Activated CD8-positive, alpha-beta T cell treated with anti-CD3 and anti-CD28 coated beads for 36 hours (primary cell): ENCODE measurements at regions of chr14 and their contacts with region 1.

Region 1: DNA sequence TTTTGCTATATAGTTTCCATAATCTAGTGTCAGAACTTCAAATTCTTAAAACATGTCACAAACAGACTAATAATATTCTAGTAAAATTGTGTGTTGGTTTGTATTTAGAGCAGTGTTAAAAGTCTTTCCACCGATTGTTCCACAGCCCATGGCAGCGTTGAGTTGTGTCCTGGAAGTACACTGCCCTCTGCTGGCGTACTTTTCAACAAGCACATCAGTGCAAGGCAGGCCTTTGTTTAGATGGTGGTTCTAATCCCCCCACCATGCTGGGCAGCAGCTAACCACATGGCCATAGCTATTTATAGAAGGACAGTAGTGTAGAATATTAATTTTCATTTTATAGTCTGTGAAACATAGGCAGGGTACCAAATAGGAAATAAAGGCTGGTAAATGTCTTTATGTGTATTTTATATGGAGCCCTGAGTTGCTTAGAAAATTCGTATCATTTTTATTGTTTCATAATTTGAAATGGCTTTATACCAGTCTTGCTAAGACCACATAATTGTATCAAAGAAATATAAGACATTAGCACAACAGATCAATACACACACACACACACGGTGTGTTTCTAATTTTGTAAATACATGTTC is 235.4 kb downstream of the SEC23A start:
- DNase-seq: peak; percentile 76
- ATAC-seq: peak; percentile 80
- H3K4me3 Mint-ChIP-seq: no peak overlapping the region
- H3K27ac Mint-ChIP-seq: no peak overlapping the region
- H3K4me1 Mint-ChIP-seq: no peaks in the 10 kb centered on the region
- H3K27me3 Mint-ChIP-seq: no peaks in the 10 kb centered on the region
- CTCF ChIP-seq: peak; percentile 76

Region 2: DNA sequence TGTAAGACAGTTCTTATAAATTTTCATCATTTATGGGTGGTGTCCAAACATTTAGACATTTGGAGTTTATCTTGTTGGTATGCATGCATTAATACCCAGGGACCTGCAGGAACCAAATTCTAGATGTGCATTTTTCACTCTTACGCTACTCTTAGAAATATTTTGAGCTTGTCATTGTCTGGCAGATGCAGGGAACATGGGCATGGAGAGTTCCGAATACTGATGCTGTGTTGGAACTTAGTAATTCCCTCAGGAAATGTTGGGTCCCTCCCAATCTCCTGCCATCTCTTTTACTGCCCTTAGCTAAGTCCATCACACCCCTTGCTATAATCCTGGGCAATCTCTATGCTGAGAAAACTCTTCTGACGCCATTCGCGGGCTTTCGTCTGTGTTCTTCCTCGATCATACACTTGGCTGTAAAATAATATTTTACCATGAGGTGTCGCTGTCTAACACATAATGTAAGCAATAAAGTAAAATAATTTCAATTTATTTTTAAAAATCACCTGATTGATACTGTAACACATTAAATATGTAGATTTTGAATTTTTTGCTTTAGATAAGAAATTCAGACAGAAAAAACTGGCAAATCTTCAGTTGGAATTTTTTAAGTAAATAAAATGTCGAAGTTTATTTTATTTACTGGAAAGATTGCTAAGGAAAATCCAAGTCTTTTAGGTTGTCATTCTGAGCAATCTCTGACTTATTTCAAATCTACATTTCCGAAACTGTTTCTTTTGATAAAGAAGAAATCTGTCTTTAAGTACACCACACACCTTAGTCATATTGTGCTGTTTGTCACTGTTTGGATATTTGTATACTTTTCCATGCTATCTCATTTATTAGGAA is 964.1 kb before region 1 on chr14:
- CTCF ChIA-PET with region 1: interaction called, 11 read pairs
- POLR2A ChIA-PET with region 1: no interaction called
- intact Hi-C with region 1: loop called (anchors 5 kb)
- DNase-seq: peak; percentile 17
- ATAC-seq: no peak
- H3K4me3 Mint-ChIP-seq: no peak overlapping the region
- H3K27ac Mint-ChIP-seq: no peak overlapping the region
- H3K4me1 Mint-ChIP-seq: no peaks in the 10 kb centered on the region
- H3K27me3 Mint-ChIP-seq: peaks cover 9% of the 10 kb centered on the region
- CTCF ChIP-seq: peak; percentile 73

Region 3: GRCh38 chr14:38721822-38722431 is 145.7 kb before region 1 on chr14:
- CTCF ChIA-PET with region 1: interaction called, 27 read pairs
- POLR2A ChIA-PET with region 1: no interaction called
- intact Hi-C with region 1: loop called (anchors 5 kb)
- DNase-seq: peak; percentile 63
- ATAC-seq: peak; percentile 69
- H3K4me3 Mint-ChIP-seq: no peak overlapping the region
- H3K27ac Mint-ChIP-seq: no peak overlapping the region
- H3K4me1 Mint-ChIP-seq: no peaks in the 10 kb centered on the region
- H3K27me3 Mint-ChIP-seq: no peaks in the 10 kb centered on the region
- CTCF ChIP-seq: peak; percentile 62

Region 4: GRCh38 chr14:38762426-38762825 is 105.2 kb before region 1 on chr14:
- CTCF ChIA-PET with region 1: no interaction called
- POLR2A ChIA-PET with region 1: no interaction called
- intact Hi-C with region 1: no loop called
- DNase-seq: no peak
- ATAC-seq: no peak
- H3K4me3 Mint-ChIP-seq: no peak overlapping the region
- H3K27ac Mint-ChIP-seq: no peak overlapping the region
- H3K4me1 Mint-ChIP-seq: no peaks in the 10 kb centered on the region
- H3K27me3 Mint-ChIP-seq: no peaks in the 10 kb centered on the region
- CTCF ChIP-seq: no peak

Region 5: DNA sequence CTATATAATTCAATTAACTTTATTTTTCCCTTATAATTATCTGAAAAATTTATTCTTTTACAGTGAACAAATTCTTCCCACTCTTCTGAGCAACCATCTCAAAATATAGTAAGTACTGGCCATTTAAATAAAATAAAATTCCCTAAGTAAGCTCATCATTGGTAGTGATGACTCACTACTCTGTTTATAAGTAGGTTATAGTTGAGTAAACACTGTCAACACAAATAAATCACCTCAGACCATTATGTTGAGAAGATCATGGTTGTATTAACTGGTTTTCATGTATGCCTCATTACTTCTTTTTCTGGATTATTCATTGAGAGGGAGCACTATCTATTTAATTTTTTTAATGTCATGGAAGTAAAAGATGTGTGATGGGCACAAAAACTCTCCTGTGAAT is 14.9 kb after region 1 on chr14:
- CTCF ChIA-PET with region 1: interaction called, 12 read pairs
- POLR2A ChIA-PET with region 1: no interaction called
- intact Hi-C with region 1: no loop called
- DNase-seq: no peak
- ATAC-seq: no peak
- H3K4me3 Mint-ChIP-seq: no peak overlapping the region
- H3K27ac Mint-ChIP-seq: no peak overlapping the region
- H3K4me1 Mint-ChIP-seq: no peaks in the 10 kb centered on the region
- H3K27me3 Mint-ChIP-seq: no peaks in the 10 kb centered on the region
- CTCF ChIP-seq: no peak

Region 6: GRCh38 chr14:38910092-38910491 is 42.4 kb after region 1 on chr14:
- CTCF ChIA-PET with region 1: no interaction called
- POLR2A ChIA-PET with region 1: no interaction called
- intact Hi-C with region 1: no loop called
- DNase-seq: no peak
- ATAC-seq: no peak
- H3K4me3 Mint-ChIP-seq: no peak overlapping the region
- H3K27ac Mint-ChIP-seq: no peak overlapping the region
- H3K4me1 Mint-ChIP-seq: no peaks in the 10 kb centered on the region
- H3K27me3 Mint-ChIP-seq: peaks cover 4% of the 10 kb centered on the region
- CTCF ChIP-seq: no peak

Region 7: GRCh38 chr14:39097159-39097558 is 229.5 kb after region 1 on chr14:
- CTCF ChIA-PET with region 1: no interaction called
- POLR2A ChIA-PET with region 1: no interaction called
- intact Hi-C with region 1: no loop called
- DNase-seq: peak; percentile 54
- ATAC-seq: peak; percentile 97
- H3K4me3 Mint-ChIP-seq: peak overlapping the region; percentile 50
- H3K27ac Mint-ChIP-seq: peak overlapping the region; percentile 88
- H3K4me1 Mint-ChIP-seq: peaks cover 44% of the 10 kb centered on the region
- H3K27me3 Mint-ChIP-seq: no peaks in the 10 kb centered on the region
- CTCF ChIP-seq: no peak